Activated naive CD4-positive, alpha-beta T cell treated with anti-CD3 and anti-CD28 coated beads for 36 hours (primary cell): ENCODE measurements at regions of chr12 and their contacts with region 1.

Region 1: DNA sequence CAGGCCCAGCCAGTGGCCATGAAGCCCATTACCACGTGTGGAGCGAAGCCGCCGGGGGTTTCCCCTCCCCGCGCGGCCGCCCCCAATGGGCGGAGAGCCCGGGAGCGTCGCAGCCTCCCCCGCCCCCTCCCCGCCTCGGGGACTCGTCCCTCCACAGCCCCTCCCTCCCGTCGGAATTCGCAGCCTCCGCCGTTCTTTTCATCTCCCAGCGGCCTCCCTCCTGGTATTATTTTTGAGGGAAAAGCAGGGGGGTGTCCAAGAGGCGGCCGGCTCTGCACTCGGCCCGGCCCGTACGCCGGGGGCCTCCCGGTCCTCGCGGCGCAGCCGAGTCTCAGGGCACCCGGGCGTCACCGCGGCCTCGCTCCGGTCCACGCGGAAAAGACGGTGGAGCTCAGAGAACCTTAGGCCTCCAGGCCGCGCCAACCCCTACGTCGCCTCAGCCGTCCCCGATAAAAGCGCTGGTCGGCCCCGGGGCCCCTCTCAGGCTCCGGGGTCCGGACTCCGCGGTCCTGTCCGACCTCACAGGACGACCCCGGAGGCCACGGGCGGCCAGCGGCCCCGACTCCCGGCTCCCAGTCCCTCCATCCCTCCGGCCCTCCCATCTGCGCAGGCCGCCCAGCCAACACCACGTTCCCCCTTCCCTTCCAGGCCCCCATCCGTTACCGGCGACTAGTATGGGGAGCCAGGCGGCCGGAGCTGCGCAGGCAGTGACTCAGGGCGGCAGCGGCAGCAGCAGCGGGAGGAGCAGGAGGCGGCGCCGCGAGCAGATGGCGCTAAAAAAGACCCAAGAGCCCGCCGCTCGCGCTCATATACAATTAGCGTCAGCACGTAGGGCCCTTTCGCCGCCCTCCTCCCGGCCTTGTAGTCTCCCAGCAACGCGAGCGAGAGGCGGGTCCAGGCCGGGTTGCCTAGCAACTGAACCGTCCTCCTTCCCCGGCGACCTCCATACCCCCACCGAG is at the start of gene NAP1L1:
- DNase-seq: peak; percentile 97
- H3K4me3 Mint-ChIP-seq: peak within 1 kb of the TSS; percentile 94
- H3K27ac Mint-ChIP-seq: peak within 1 kb of the TSS; percentile 98
- H3K4me1 Mint-ChIP-seq: peaks cover 47% of the 10 kb centered on the region
- H3K27me3 Mint-ChIP-seq: no peaks in the 10 kb centered on the region
- total RNA-seq, gene NAP1L1: 1,078 to 1,092 TPM

Region 2: DNA sequence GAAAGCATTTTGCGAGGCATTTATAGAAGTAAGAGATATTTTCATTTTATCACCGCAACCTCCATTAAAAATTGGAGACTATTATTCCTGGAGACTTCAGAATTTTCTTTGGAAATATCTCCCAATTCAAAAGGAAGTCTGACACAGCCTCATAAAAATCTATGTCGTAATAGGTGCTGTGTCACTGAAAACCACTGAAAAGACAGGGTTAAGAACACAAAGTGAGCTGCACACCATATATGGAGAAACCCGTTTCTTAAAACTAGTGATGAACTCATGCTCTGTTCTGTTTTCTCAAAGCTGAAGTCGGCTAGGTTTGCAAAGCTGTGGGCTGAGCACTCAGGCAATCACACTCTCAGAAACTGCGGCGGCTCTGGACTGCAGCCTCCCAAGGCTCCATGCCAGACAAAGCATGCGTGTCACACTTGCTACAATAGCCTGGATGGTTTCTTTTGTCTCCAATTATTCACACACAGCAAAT is 603.7 kb before region 1 on chr12 and contains the start of gene GLIPR1:
- CTCF ChIA-PET with region 1: no interaction called
- intact Hi-C with region 1: loop called (anchors 1 kb)
- DNase-seq: peak; percentile 77
- H3K4me3 Mint-ChIP-seq: peak within 1 kb of the TSS; percentile 87
- H3K27ac Mint-ChIP-seq: peak within 1 kb of the TSS; percentile 82
- H3K4me1 Mint-ChIP-seq: peaks cover 78% of the 10 kb centered on the region
- H3K27me3 Mint-ChIP-seq: no peaks in the 10 kb centered on the region
- total RNA-seq, gene GLIPR1: 1.3 to 1.5 TPM

Region 3: GRCh38 chr12:76020731-76021672 is 63.2 kb before region 1 on chr12:
- CTCF ChIA-PET with region 1: no interaction called
- intact Hi-C with region 1: loop called (anchors 1 kb)
- DNase-seq: peak; percentile 91
- H3K4me3 Mint-ChIP-seq: peak overlapping the region; percentile 40
- H3K27ac Mint-ChIP-seq: peak overlapping the region; percentile 95
- H3K4me1 Mint-ChIP-seq: peaks cover 45% of the 10 kb centered on the region
- H3K27me3 Mint-ChIP-seq: no peaks in the 10 kb centered on the region

Region 4: GRCh38 chr12:76158518-76159321 is 74.5 kb after region 1 on chr12:
- CTCF ChIA-PET with region 1: interaction called, 3 read pairs
- intact Hi-C with region 1: loop called (anchors 1 kb)
- DNase-seq: peak; percentile 73
- H3K4me3 Mint-ChIP-seq: no peak overlapping the region
- H3K27ac Mint-ChIP-seq: no peak overlapping the region
- H3K4me1 Mint-ChIP-seq: peaks cover 10% of the 10 kb centered on the region
- H3K27me3 Mint-ChIP-seq: no peaks in the 10 kb centered on the region

Region 5: DNA sequence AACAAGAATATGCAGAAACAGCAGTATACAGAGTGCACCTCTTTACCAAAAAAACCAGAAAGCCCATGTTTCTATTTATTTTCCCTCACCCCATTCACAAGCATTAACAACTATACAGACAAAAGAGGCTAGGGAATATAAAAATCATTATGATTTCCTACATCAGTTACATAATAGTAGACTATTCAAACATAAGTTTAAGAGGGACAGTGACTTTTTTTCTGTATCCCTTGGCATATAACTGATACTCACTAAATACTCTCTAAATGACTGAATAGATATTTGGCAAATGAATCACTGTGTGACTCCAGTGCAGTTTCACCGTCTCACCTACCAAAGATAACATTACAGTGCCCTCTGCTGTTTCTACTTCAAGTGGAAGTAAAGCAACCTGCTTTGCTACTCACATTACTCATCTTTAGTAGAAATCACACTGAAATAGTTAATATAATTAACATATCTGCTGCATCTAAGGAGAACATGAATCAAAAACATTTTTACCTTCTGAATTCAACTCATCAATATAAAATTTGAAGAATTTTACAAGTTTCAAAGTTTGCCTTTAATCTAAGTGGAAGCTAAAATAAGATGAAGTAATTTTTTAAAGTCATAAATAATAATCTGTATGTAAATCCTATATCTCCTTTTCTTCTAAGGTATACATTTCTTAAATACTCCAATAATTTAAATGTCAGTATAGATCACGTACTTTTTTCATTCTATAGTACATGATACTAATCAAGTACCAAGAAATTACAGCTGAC is 371.6 kb after region 1 on chr12:
- CTCF ChIA-PET with region 1: no interaction called
- intact Hi-C with region 1: loop called (anchors 1 kb)
- DNase-seq: peak; percentile 52
- H3K4me3 Mint-ChIP-seq: no peak overlapping the region
- H3K27ac Mint-ChIP-seq: no peak overlapping the region
- H3K4me1 Mint-ChIP-seq: peaks cover 15% of the 10 kb centered on the region
- H3K27me3 Mint-ChIP-seq: no peaks in the 10 kb centered on the region

Region 6: GRCh38 chr12:76652402-76652801 is 568.2 kb after region 1 on chr12:
- CTCF ChIA-PET with region 1: no interaction called
- intact Hi-C with region 1: no loop called
- DNase-seq: no peak
- H3K4me3 Mint-ChIP-seq: no peak overlapping the region
- H3K27ac Mint-ChIP-seq: no peak overlapping the region
- H3K4me1 Mint-ChIP-seq: no peaks in the 10 kb centered on the region
- H3K27me3 Mint-ChIP-seq: no peaks in the 10 kb centered on the region

Region 7: GRCh38 chr12:76878899-76879709 is 794.9 kb after region 1 on chr12 and contains the start of gene CSRP2:
- CTCF ChIA-PET with region 1: no interaction called
- intact Hi-C with region 1: loop called (anchors 2 kb)
- DNase-seq: peak; percentile 80
- H3K4me3 Mint-ChIP-seq: peak within 1 kb of the TSS; percentile 87
- H3K27ac Mint-ChIP-seq: peak within 1 kb of the TSS; percentile 50
- H3K4me1 Mint-ChIP-seq: peaks cover 3% of the 10 kb centered on the region
- H3K27me3 Mint-ChIP-seq: peaks cover 36% of the 10 kb centered on the region
- total RNA-seq, gene CSRP2: 0.62 to 0.86 TPM